Right ventricle myocardium superior (tissue), 1 donor: ENCODE measurements at regions of chr1 and their contacts with region 1.

Region 1: DNA sequence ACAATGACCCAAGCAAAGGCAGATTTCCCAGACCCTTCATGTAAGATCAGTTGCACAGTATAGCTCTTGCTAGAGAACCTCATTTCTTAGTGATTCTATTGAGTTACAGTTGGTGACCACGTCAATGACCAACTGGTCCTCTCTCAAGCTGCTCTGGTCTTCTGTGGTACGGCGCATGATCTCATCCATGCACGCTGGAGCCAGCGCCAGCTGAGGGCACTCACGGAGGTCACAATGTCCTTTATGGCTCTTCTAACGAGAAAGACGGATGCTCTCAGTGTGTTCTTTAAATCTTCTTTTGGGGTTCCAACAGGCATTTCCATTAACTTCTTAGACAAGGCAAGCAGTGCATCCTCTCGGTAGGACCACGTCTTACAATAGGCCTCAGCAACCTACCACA is 22.3 kb downstream of the CEP104 start:
- DNase-seq: no peak
- ATAC-seq: no peak

Region 2: DNA sequence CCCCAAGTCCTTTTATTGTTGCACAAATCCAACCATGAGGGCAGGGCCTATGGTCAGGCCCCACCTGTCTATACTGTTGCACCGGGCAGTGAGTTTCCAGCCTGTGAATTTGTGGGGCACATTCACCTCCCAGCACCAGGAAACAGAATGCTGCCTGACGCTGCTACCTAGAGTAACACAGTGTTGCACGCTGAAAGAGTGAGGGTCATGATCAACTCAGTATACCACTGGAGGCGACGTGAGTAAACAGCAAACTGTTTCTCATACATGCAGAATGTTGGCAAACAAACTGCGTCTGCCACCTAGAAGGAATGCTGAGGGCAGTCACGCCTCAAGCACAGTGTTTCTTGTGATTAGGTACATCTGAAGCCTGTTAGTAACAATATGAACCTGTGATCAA is 25.0 kb before region 1 on chr1:
- intact Hi-C with region 1: loop called (anchors 2 kb)
- DNase-seq: no peak
- ATAC-seq: no peak